SK-N-SH (cell line): ENCODE measurements at regions of chr17 and their contacts with region 1.

Region 1: GRCh38 chr17:19447085-19447583 is 36.1 kb downstream of the RNF112 start:
- DNase-seq: peak; percentile 84
- H3K4me3 ChIP-seq: no peak overlapping the region; a peak in 1 of 4 replicates
- H3K27ac ChIP-seq: peak overlapping the region; percentile 70 to 82
- H3K4me1 ChIP-seq: peaks cover 9 to 27% of the 10 kb centered on the region in 2 experiments
- H3K27me3 ChIP-seq: no peaks in the 10 kb centered on the region
- CTCF ChIP-seq: peak; percentile 93
- EP300 ChIP-seq: no peak
- RAD21 ChIP-seq: peak; percentile 98

Region 2: DNA sequence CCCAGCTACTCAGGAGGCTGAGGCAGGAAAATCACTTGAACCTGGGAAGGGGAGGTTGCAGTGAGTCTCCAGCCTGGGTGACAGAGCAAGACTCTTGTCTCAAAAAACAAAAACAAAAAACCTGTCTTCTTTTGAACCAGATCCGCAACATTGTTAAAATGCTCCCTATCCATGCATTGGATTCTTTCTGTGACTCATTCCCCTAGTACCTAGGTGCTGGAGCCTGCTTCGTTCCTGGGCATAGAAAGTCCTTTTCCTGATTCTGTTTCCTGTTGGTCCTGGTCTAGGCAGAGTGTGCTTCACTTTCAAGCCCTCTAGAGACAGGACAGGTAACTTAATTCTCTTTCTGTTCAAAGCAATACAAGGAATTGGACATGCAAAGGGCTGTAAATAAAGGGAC is 204.8 kb before region 1 on chr17:
- CTCF ChIA-PET with region 1: no interaction called
- POLR2A ChIA-PET with region 1: no interaction called
- DNase-seq: no peak
- H3K4me3 ChIP-seq: no peak overlapping the region
- H3K27ac ChIP-seq: no peak overlapping the region
- H3K4me1 ChIP-seq: peaks cover 10 to 18% of the 10 kb centered on the region in 2 experiments; a peak in 3 of 4 replicates
- H3K27me3 ChIP-seq: no peaks in the 10 kb centered on the region
- CTCF ChIP-seq: no peak
- EP300 ChIP-seq: no peak
- RAD21 ChIP-seq: no peak

Region 3: GRCh38 chr17:19270689-19271611 is 176.2 kb before region 1 on chr17:
- CTCF ChIA-PET with region 1: no interaction called
- POLR2A ChIA-PET with region 1: no interaction called
- DNase-seq: no peak
- H3K4me3 ChIP-seq: no peak overlapping the region
- H3K27ac ChIP-seq: no peak overlapping the region; a peak in 1 of 4 replicates
- H3K4me1 ChIP-seq: peaks cover 0 to 17% of the 10 kb centered on the region in 2 experiments; a peak in 1 of 4 replicates
- H3K27me3 ChIP-seq: no peaks in the 10 kb centered on the region
- CTCF ChIP-seq: no peak
- EP300 ChIP-seq: no peak
- RAD21 ChIP-seq: no peak

Region 4: DNA sequence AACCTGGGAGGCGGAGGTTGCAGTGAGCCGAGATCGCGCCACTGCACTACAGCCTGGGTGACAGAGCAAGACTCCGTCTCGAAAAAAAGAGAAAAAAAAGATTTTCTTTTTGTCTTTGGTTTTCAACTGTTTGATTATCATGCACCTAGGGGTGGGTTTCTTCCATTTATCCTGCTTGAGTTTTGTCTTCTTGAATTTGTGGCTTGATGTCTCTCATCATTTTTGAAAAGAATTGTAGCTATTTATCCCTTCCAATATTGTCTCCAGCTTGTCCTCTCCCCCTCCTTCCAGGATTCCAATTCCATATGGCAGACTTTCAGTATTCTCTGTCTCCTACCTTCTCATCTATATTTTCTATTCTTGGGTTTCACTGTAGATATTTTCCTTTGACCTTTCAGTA is 92.4 kb before region 1 on chr17:
- CTCF ChIA-PET with region 1: interaction called, 305 read pairs
- POLR2A ChIA-PET with region 1: no interaction called
- DNase-seq: no peak
- H3K4me3 ChIP-seq: no peak overlapping the region
- H3K27ac ChIP-seq: peak overlapping the region in 1 of 2 experiments; percentile 67; a peak in 2 of 4 replicates
- H3K4me1 ChIP-seq: peaks cover 0 to 5% of the 10 kb centered on the region in 2 experiments; a peak in 1 of 4 replicates
- H3K27me3 ChIP-seq: no peaks in the 10 kb centered on the region
- CTCF ChIP-seq: no peak
- EP300 ChIP-seq: no peak
- RAD21 ChIP-seq: no peak

Region 5: GRCh38 chr17:19370493-19370960 is 76.6 kb before region 1 on chr17:
- CTCF ChIA-PET with region 1: interaction called, 305 read pairs
- POLR2A ChIA-PET with region 1: no interaction called
- DNase-seq: no peak
- H3K4me3 ChIP-seq: no peak overlapping the region
- H3K27ac ChIP-seq: no peak overlapping the region; a peak in 1 of 4 replicates
- H3K4me1 ChIP-seq: peaks cover 0 to under 1% of the 10 kb centered on the region in 2 experiments; a peak in 2 of 4 replicates
- H3K27me3 ChIP-seq: no peaks in the 10 kb centered on the region
- CTCF ChIP-seq: no peak
- EP300 ChIP-seq: no peak
- RAD21 ChIP-seq: no peak

Region 6: GRCh38 chr17:19386974-19387920 is 59.9 kb before region 1 on chr17 and contains the start of gene MFAP4:
- CTCF ChIA-PET with region 1: interaction called, 56 read pairs
- POLR2A ChIA-PET with region 1: interaction called, 3 read pairs
- DNase-seq: peak; percentile 91
- H3K4me3 ChIP-seq: peak within 1 kb of the TSS; percentile 55 to 69
- H3K27ac ChIP-seq: peak within 1 kb of the TSS; percentile 98 to 99
- H3K4me1 ChIP-seq: peaks cover 58 to 90% of the 10 kb centered on the region in 2 experiments
- H3K27me3 ChIP-seq: no peaks in the 10 kb centered on the region
- CTCF ChIP-seq: no peak
- EP300 ChIP-seq: peak; percentile 71 to 90
- RAD21 ChIP-seq: 0 out of 2 replicates have a peak, but pooled peaks have one; percentile 3
- polyA plus RNA-seq, gene MFAP4: 112 and 120 TPM in 2 replicates

Region 7: DNA sequence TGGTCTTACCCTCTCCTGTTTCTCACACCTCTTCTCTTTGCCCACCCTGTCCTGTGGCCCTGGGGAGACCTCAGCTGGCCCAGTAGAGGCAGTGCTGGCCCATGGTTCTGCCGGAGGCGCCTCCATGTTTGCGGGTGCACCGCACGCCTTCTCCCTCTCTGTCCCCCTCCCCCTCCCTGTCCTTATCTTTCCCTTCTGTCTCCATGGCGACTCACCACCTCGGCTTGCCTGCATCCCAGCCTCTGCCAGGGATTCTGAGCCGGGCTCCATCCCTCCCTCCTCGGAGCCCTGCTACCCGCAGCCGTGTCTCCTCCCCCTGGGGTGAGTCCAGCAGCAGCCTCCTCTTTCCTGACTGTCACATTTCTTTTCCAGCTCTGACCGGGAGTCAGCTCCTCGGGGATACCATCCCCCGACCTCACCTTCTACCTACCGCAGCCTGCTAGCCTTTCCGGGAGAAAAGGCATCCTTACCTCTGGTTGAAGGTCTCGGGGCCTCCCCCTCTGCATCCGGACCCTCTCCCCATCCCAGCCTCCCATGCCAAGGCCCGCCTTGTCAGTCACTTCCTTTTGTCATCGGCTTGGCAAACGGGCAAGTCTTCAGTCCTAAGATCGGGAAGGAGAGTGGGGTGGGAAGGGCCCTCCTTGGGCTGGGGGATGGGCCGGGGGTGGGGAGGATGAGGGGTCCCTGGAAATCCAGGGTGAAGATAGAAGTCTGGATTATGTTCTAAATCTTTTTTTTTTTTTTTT is 36.1 kb before region 1 on chr17 and contains the start of gene RNF112:
- CTCF ChIA-PET with region 1: interaction called, 21 read pairs
- POLR2A ChIA-PET with region 1: no interaction called
- DNase-seq: peak; percentile 92
- H3K4me3 ChIP-seq: peak within 1 kb of the TSS; percentile 50 to 78
- H3K27ac ChIP-seq: peak within 1 kb of the TSS; percentile 53 to 86; a peak in 3 of 4 replicates
- H3K4me1 ChIP-seq: peaks cover 17 to 40% of the 10 kb centered on the region in 2 experiments; a peak in 3 of 4 replicates
- H3K27me3 ChIP-seq: no peaks in the 10 kb centered on the region
- CTCF ChIP-seq: peak; percentile 47
- EP300 ChIP-seq: no peak
- RAD21 ChIP-seq: peak; percentile 70
- polyA plus RNA-seq, gene RNF112: 22.6 and 26.9 TPM in 2 replicates

Region 8: DNA sequence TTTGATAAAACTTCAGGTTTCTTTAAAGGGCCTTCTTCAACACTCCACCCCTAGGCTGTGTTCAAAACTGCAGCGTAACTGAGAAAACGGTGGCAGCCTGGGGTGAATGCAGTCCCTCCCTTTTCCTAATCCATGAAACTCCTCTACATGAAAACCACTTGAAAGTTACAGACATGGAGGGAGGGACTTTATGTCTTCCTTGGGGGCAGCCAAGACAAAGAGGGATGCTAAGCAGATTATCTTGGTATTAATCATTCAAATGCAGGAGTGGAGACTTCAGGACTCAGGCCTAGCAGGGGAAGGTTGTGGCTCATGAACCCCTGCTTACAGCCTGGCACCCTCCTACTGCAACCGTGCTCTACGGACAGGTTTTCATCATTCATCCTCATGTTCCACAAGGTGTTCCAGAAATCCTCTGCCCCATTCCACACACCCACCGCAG is 10.7 kb after region 1 on chr17:
- CTCF ChIA-PET with region 1: interaction called, 15 read pairs
- POLR2A ChIA-PET with region 1: interaction called, 6 read pairs
- DNase-seq: no peak
- H3K4me3 ChIP-seq: no peak overlapping the region
- H3K27ac ChIP-seq: no peak overlapping the region
- H3K4me1 ChIP-seq: no peaks in the 10 kb centered on the region
- H3K27me3 ChIP-seq: no peaks in the 10 kb centered on the region
- CTCF ChIP-seq: no peak
- EP300 ChIP-seq: no peak
- RAD21 ChIP-seq: no peak

Region 9: DNA sequence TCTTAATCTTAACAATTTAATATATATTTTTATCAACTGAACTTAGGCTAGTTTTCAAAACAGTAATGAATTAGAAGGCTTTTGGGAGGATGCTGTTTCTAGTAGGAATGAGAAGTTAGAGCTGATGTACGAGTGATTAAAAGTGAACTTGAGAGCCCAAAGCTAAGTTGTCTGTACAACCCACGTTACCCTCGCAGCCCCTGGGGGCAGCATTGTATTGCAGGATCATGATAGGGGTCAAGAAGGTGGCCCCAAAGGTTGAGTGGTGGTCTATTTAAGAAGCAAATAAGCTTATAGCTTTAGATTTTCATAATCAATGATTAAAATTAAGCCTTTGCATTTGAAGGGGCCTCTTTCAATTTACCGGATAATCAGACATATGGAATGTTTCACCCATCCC is 167.8 kb after region 1 on chr17:
- CTCF ChIA-PET with region 1: no interaction called
- POLR2A ChIA-PET with region 1: no interaction called
- DNase-seq: no peak
- H3K4me3 ChIP-seq: no peak overlapping the region
- H3K27ac ChIP-seq: no peak overlapping the region
- H3K4me1 ChIP-seq: no peaks in the 10 kb centered on the region
- H3K27me3 ChIP-seq: no peaks in the 10 kb centered on the region
- CTCF ChIP-seq: peak; percentile 20
- EP300 ChIP-seq: no peak
- RAD21 ChIP-seq: no peak